ENCODE measurements at regions of chr1 and their contacts with region 1.

Region 1: GRCh38 chr1:244864253-244865027 is at the start of gene HNRNPU:
- DNase-seq: peak; percentile 96
- ATAC-seq: peak; percentile 70
- H3K4me3 Mint-ChIP-seq: peak within 1 kb of the TSS; percentile 93
- H3K27ac Mint-ChIP-seq: peak within 1 kb of the TSS; percentile 96
- H3K4me1 Mint-ChIP-seq: peaks cover 36% of the 10 kb centered on the region
- H3K27me3 Mint-ChIP-seq: no peaks in the 10 kb centered on the region
- total RNA-seq, gene HNRNPU: 432 to 435 TPM

Region 2: GRCh38 chr1:244843148-244843978 is 21.1 kb before region 1 on chr1:
- CTCF ChIA-PET with region 1: interaction called, 9 read pairs
- POLR2A ChIA-PET with region 1: interaction called, 163 read pairs
- DNase-seq: no peak
- ATAC-seq: no peak
- H3K4me3 Mint-ChIP-seq: no peak overlapping the region
- H3K27ac Mint-ChIP-seq: no peak overlapping the region
- H3K4me1 Mint-ChIP-seq: peaks cover 70% of the 10 kb centered on the region
- H3K27me3 Mint-ChIP-seq: no peaks in the 10 kb centered on the region

Region 3: GRCh38 chr1:244849189-244849866 is 15.1 kb before region 1 on chr1:
- CTCF ChIA-PET with region 1: interaction called, 9 read pairs
- POLR2A ChIA-PET with region 1: interaction called, 163 read pairs
- DNase-seq: no peak
- ATAC-seq: no peak
- H3K4me3 Mint-ChIP-seq: no peak overlapping the region
- H3K27ac Mint-ChIP-seq: no peak overlapping the region
- H3K4me1 Mint-ChIP-seq: peaks cover 67% of the 10 kb centered on the region
- H3K27me3 Mint-ChIP-seq: no peaks in the 10 kb centered on the region

Region 4: DNA sequence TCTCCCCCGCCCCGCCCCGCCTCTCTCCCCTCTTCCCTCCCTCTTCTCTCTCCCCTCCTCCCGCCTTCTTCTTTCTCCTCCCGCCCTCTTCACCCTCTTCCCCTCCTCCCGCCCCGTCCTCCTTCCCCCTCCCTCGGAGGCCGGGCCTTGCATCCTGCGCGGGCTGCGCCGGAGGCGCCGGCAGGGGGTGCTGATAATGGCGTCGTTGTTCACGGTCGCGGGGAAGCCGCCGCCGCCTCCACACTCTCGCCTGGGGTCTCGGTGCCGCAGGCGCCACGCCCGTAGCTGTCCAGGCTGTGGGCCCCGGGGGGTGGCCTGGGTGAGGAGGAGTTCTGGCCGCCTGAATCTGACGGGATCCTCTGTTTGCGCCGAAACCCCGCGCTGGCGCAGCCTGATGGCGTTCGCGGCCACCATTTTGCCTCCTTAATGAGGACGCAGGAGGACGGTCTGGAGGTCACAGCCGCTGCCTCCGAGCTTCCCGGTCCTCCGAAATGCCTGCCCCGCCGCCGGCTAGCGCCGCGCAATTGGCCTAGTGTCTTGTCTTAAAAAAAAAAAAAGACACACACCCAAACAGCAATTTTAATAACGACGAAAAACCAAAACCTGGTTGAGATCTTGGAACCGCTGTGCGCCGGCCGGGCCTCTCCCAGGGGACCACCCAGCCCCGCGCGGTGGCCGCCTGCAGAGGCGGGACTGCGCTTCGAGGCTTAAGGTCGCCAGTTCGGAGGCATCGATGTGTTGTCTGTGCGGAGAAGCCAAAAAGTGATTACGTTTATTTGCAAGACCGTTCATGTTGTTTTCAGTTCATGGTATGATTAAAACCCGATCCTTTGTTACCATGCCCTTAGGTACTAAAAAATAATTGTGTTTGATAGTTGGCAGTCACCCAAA is 106.5 kb after region 1 on chr1:
- CTCF ChIA-PET with region 1: interaction called, 9 read pairs
- POLR2A ChIA-PET with region 1: interaction called, 53 read pairs
- DNase-seq: peak; percentile 94
- ATAC-seq: peak; percentile 83
- H3K4me3 Mint-ChIP-seq: peak overlapping the region; percentile 88
- H3K27ac Mint-ChIP-seq: peak overlapping the region; percentile 99
- H3K4me1 Mint-ChIP-seq: peaks cover 18% of the 10 kb centered on the region
- H3K27me3 Mint-ChIP-seq: no peaks in the 10 kb centered on the region